Activated CD4-positive, alpha-beta T cell treated with anti-CD3 and anti-CD28 coated beads for 36 hours (primary cell): ENCODE measurements at regions of chr3 and their contacts with region 1.

Region 1: GRCh38 chr3:75248974-75249373 is 415.2 kb upstream of the FRG2C start:
- DNase-seq: no peak
- ATAC-seq: no peak
- H3K4me3 Mint-ChIP-seq: no peak overlapping the region
- H3K27ac Mint-ChIP-seq: no peak overlapping the region
- H3K4me1 Mint-ChIP-seq: peaks cover 4% of the 10 kb centered on the region
- H3K27me3 Mint-ChIP-seq: peaks cover 1% of the 10 kb centered on the region

Region 2: GRCh38 chr3:75294124-75294523 is 45.1 kb after region 1 on chr3:
- CTCF ChIA-PET with region 1: no interaction called
- POLR2A ChIA-PET with region 1: no interaction called
- intact Hi-C with region 1: loop called in 1 of 2 experiments (anchors 5 kb)
- DNase-seq: peak; percentile 14
- ATAC-seq: no peak
- H3K4me3 Mint-ChIP-seq: no peak overlapping the region
- H3K27ac Mint-ChIP-seq: no peak overlapping the region
- H3K4me1 Mint-ChIP-seq: no peaks in the 10 kb centered on the region
- H3K27me3 Mint-ChIP-seq: peaks cover 3% of the 10 kb centered on the region